ENCODE measurements at regions of chr3 and their contacts with region 1.

Region 1: GRCh38 chr3:102673271-102674115 is 238.7 kb downstream of the ZPLD1 start:
- DNase-seq: peak; percentile 46
- ATAC-seq: peak; percentile 76
- H3K4me3 ChIP-seq: peak overlapping the region; percentile 4 to 7; a peak in 1 of 4 replicates
- H3K27ac ChIP-seq: no peak overlapping the region
- H3K4me1 ChIP-seq: peaks cover 0 to 4% of the 10 kb centered on the region in 2 experiments; a peak in 1 of 4 replicates
- H3K27me3 ChIP-seq: no peaks in the 10 kb centered on the region
- CTCF ChIP-seq: peak; percentile 65 to 92 (median 79); a peak in 5 of 6 replicates
- POLR2A ChIP-seq: no peak
- RAD21 ChIP-seq: peak; percentile 88

Region 2: DNA sequence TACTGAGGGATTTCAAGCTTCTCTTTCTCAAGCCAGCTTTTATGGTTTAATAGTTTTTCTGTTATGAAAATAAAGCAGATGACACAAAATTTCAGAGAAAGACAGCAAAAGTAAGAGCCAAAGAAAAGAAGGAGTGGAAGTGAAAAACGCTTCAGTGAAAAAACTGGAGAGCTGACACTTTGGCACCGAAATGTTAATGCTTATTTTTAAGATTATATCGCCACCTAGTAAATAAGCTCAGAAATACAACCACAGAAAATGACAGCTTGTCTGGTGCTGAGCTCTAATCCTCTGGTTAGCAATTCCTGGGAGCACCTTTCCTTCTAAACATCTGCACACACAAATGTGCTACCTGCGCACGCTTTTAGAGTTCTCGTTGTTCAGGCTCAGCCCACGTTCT is 137.0 kb before region 1 on chr3:
- CTCF ChIA-PET with region 1: interaction called, 10 read pairs
- POLR2A ChIA-PET with region 1: no interaction called
- RAD21 ChIA-PET with region 1: no interaction called
- intact Hi-C with region 1: no loop called
- DNase-seq: peak; percentile 26
- ATAC-seq: peak; percentile 84
- H3K4me3 ChIP-seq: no peak overlapping the region
- H3K27ac ChIP-seq: no peak overlapping the region
- H3K4me1 ChIP-seq: no peaks in the 10 kb centered on the region
- H3K27me3 ChIP-seq: no peaks in the 10 kb centered on the region
- CTCF ChIP-seq: peak; percentile 34 to 63 (median 58); a peak in 5 of 6 replicates
- POLR2A ChIP-seq: no peak
- RAD21 ChIP-seq: peak; percentile 76

Region 3: GRCh38 chr3:102741108-102741507 is 67.6 kb after region 1 on chr3:
- CTCF ChIA-PET with region 1: interaction called, 52 read pairs
- POLR2A ChIA-PET with region 1: no interaction called
- RAD21 ChIA-PET with region 1: interaction called in 1 of 2 experiments, 5 read pairs
- intact Hi-C with region 1: loop called (anchors 1 kb)
- DNase-seq: peak; percentile 8
- ATAC-seq: peak; percentile 80
- H3K4me3 ChIP-seq: no peak overlapping the region
- H3K27ac ChIP-seq: no peak overlapping the region
- H3K4me1 ChIP-seq: no peaks in the 10 kb centered on the region
- H3K27me3 ChIP-seq: no peaks in the 10 kb centered on the region
- CTCF ChIP-seq: peak; percentile 38 to 51 (median 46); a peak in 4 of 6 replicates
- POLR2A ChIP-seq: no peak
- RAD21 ChIP-seq: peak; percentile 63

Region 4: DNA sequence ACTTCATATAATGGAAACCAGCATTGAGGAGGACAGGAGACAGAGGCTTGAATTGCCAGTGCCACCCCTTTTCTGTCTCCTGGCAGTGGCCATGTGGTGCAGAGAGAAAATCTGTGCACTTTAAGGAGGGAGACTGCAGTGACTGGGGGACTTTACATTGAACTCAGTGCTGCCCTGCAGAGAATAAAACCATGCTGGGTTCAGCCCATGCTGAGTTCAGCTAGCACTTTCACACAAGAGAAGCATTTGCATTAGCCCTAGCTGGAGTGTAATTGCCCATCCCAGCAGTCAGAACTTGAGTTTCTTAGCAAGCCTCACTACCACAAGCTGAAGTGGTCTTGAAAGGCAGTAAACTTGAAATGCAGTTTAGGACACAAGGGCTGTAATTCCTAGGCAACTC is 438.8 kb after region 1 on chr3:
- CTCF ChIA-PET with region 1: no interaction called
- POLR2A ChIA-PET with region 1: no interaction called
- RAD21 ChIA-PET with region 1: no interaction called
- intact Hi-C with region 1: loop called (anchors 10 kb)
- DNase-seq: no peak
- ATAC-seq: no peak
- H3K4me3 ChIP-seq: no peak overlapping the region
- H3K27ac ChIP-seq: no peak overlapping the region
- H3K4me1 ChIP-seq: no peaks in the 10 kb centered on the region
- H3K27me3 ChIP-seq: no peaks in the 10 kb centered on the region
- CTCF ChIP-seq: no peak
- POLR2A ChIP-seq: no peak
- RAD21 ChIP-seq: no peak

Region 5: GRCh38 chr3:103295974-103296570 is 622.6 kb after region 1 on chr3:
- CTCF ChIA-PET with region 1: interaction called, 4 read pairs
- POLR2A ChIA-PET with region 1: no interaction called
- RAD21 ChIA-PET with region 1: no interaction called
- intact Hi-C with region 1: loop called (anchors 10 kb)
- DNase-seq: peak; percentile 19
- ATAC-seq: no peak
- H3K4me3 ChIP-seq: no peak overlapping the region
- H3K27ac ChIP-seq: no peak overlapping the region
- H3K4me1 ChIP-seq: no peaks in the 10 kb centered on the region
- H3K27me3 ChIP-seq: no peaks in the 10 kb centered on the region
- CTCF ChIP-seq: peak; percentile 19 to 58 (median 22); a peak in 4 of 6 replicates
- POLR2A ChIP-seq: no peak
- RAD21 ChIP-seq: peak; percentile 53

Measured in HCT116 (cell line).